ENCODE measurements at regions of chr12 and their contacts with region 1.

Region 1: GRCh38 chr12:779745-780734 is 27.7 kb downstream of the WNK1 start:
- DNase-seq: no peak
- H3K4me3 Mint-ChIP-seq: peak overlapping the region; percentile 66
- H3K27ac Mint-ChIP-seq: no peak overlapping the region
- H3K4me1 Mint-ChIP-seq: peaks cover 48% of the 10 kb centered on the region
- H3K27me3 Mint-ChIP-seq: no peaks in the 10 kb centered on the region

Region 2: GRCh38 chr12:795305-795704 is 15.3 kb after region 1 on chr12:
- intact Hi-C with region 1: loop called (anchors 2 kb)
- DNase-seq: peak; percentile 78
- H3K4me3 Mint-ChIP-seq: peak overlapping the region; percentile 68
- H3K27ac Mint-ChIP-seq: peak overlapping the region; percentile 94
- H3K4me1 Mint-ChIP-seq: peaks cover 58% of the 10 kb centered on the region
- H3K27me3 Mint-ChIP-seq: no peaks in the 10 kb centered on the region

Region 3: DNA sequence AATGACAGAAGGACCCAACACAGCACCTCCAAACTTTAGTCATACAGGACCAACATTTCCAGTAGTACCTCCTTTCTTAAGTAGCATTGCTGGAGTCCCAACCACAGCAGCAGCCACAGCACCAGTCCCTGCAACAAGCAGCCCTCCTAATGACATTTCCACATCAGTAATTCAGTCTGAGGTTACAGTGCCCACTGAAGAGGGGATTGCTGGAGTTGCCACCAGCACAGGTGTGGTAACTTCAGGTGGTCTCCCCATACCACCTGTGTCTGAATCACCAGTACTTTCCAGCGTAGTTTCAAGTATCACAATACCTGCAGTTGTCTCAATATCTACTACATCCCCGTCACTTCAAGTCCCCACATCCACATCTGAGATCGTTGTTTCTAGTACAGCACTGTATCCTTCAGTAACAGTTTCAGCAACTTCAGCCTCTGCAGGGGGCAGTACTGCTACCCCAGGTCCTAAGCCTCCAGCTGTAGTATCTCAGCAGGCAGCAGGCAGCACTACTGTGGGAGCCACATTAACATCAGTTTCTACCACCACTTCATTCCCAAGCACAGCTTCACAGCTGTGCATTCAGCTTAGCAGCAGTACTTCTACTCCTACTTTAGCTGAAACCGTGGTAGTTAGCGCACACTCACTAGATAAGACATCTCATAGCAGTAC is 104.8 kb after region 1 on chr12:
- intact Hi-C with region 1: no loop called
- DNase-seq: peak; percentile 51
- H3K4me3 Mint-ChIP-seq: no peak overlapping the region
- H3K27ac Mint-ChIP-seq: no peak overlapping the region
- H3K4me1 Mint-ChIP-seq: peaks cover 2% of the 10 kb centered on the region
- H3K27me3 Mint-ChIP-seq: no peaks in the 10 kb centered on the region